Activated CD8-positive, alpha-beta T cell treated with anti-CD3 and anti-CD28 coated beads for 36 hours (primary cell): ENCODE measurements at regions of chr14 and their contacts with region 1.

Region 1: GRCh38 chr14:54722781-54723432 is 156.0 kb downstream of the SAMD4A start:
- DNase-seq: peak; percentile 26
- ATAC-seq: peak; percentile 77
- H3K4me3 Mint-ChIP-seq: no peak overlapping the region
- H3K27ac Mint-ChIP-seq: no peak overlapping the region
- H3K4me1 Mint-ChIP-seq: peaks cover 12% of the 10 kb centered on the region
- H3K27me3 Mint-ChIP-seq: peaks cover 19% of the 10 kb centered on the region
- CTCF ChIP-seq: peak; percentile 55

Region 2: DNA sequence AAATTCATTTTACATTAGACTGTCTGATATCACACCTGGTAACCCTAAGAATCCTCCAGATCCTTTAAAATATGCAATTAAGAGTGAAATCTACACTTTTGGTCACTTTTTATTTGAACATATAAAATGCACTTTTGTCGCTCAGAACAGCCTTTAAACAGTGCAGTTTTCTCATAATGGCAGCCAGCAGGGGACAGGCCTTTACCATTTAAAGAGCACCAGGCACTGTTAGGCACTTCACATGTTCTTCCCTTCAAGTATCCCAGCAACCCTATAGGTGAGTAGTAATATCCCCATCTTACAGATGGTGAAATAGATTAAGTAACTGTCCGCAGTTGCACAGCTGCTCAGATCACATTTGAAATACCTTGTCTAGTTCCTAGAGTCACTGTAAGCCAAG is 167.3 kb before region 1 on chr14:
- CTCF ChIA-PET with region 1: no interaction called
- POLR2A ChIA-PET with region 1: no interaction called
- intact Hi-C with region 1: no loop called
- DNase-seq: no peak
- ATAC-seq: no peak
- H3K4me3 Mint-ChIP-seq: no peak overlapping the region
- H3K27ac Mint-ChIP-seq: no peak overlapping the region
- H3K4me1 Mint-ChIP-seq: no peaks in the 10 kb centered on the region
- H3K27me3 Mint-ChIP-seq: peaks cover 6% of the 10 kb centered on the region
- CTCF ChIP-seq: no peak

Region 3: DNA sequence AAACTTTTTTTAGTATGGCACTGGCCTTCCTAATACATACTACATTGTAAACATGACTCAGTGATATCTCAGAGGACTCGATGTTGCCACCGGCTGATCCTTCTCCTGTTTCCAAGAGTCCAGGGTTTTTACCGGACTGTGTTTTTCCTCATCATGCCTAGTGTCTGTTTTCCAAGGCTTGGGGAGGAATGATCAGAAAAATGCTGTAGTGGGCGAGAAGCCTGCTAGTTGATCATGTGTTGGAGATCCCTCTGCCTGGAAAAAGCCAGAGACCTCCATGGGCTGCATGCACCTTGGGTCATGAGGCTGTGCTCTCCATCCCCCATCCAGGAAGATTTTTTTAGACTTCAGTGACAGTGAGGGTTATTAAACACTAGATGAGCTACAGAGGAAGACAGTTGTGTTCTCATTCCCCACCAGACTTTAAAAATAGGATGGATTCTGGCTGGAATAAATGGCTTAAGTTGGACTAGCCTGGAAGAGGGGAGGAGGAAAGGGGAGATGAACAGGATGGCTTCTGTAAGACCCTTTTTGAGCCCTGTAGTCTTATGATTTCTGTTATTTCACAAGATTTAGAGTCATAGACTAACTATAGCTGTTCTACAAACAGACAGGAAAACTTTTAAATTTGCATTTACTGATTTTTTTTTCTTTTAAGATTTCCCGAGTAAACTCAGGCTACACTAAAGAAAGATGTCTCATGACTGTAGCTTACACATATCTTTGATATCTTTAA is 10.3 kb before region 1 on chr14:
- CTCF ChIA-PET with region 1: interaction called, 30 read pairs
- POLR2A ChIA-PET with region 1: no interaction called
- intact Hi-C with region 1: no loop called
- DNase-seq: no peak
- ATAC-seq: no peak
- H3K4me3 Mint-ChIP-seq: no peak overlapping the region
- H3K27ac Mint-ChIP-seq: no peak overlapping the region
- H3K4me1 Mint-ChIP-seq: peaks cover 18% of the 10 kb centered on the region
- H3K27me3 Mint-ChIP-seq: peaks cover 7% of the 10 kb centered on the region
- CTCF ChIP-seq: no peak